ENCODE measurements at regions of chr1 and their contacts with region 1.

Region 1: GRCh38 chr1:50620680-50621329 is 197.6 kb upstream of the DMRTA2 start:
- DNase-seq: peak in 2 of 4 experiments; percentile 33 to 46
- ATAC-seq: peak; percentile 93
- H3K4me3 ChIP-seq: no peak overlapping the region
- H3K27ac ChIP-seq: no peak overlapping the region
- H3K4me1 ChIP-seq: no peaks in the 10 kb centered on the region
- H3K27me3 ChIP-seq: no peaks in the 10 kb centered on the region
- CTCF ChIP-seq: peak; percentile 22 to 63 (median 59); a peak in 5 of 6 replicates
- EP300 ChIP-seq: no peak
- POLR2A ChIP-seq: no peak
- RAD21 ChIP-seq: peak in 1 of 2 experiments; percentile 48; a peak in 2 of 4 replicates

Region 2: DNA sequence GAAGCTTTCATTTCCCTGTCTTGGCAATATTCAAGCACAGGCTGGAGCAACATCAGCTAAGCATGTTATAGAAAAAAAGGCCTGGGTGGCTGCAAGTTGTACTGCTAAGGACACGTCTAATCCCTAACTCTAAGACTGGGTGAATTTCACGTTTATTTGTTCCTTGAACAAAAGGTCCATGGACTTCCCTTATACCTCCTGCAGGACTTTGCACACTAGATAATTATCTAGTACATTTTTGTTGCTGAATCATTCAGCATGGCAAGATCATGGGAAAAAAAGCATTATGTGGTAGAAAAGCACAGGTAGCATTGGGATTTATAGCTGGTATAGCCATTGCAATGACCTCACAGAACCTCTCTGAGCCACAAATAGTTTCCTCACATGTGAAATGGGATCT is 66.9 kb before region 1 on chr1:
- CTCF ChIA-PET with region 1: no interaction called
- POLR2A ChIA-PET with region 1: no interaction called
- in situ Hi-C with region 1: no loop called
- intact Hi-C with region 1: no loop called
- DNase-seq: no peak
- ATAC-seq: peak; percentile 55
- H3K4me3 ChIP-seq: no peak overlapping the region
- H3K27ac ChIP-seq: no peak overlapping the region
- H3K4me1 ChIP-seq: peaks cover 0 to 5% of the 10 kb centered on the region in 2 experiments; a peak in 3 of 5 replicates
- H3K27me3 ChIP-seq: no peaks in the 10 kb centered on the region
- CTCF ChIP-seq: no peak
- EP300 ChIP-seq: no peak
- POLR2A ChIP-seq: no peak
- RAD21 ChIP-seq: no peak

Region 3: GRCh38 chr1:50704126-50704525 is 83.3 kb after region 1 on chr1:
- CTCF ChIA-PET with region 1: interaction called, 10 read pairs
- POLR2A ChIA-PET with region 1: interaction called, 6 read pairs
- in situ Hi-C with region 1: no loop called
- intact Hi-C with region 1: loop called (anchors 1 kb)
- DNase-seq: peak; percentile 68 to 70 (median 70)
- ATAC-seq: peak; percentile 89
- H3K4me3 ChIP-seq: no peak overlapping the region
- H3K27ac ChIP-seq: no peak overlapping the region
- H3K4me1 ChIP-seq: no peaks in the 10 kb centered on the region
- H3K27me3 ChIP-seq: no peaks in the 10 kb centered on the region
- CTCF ChIP-seq: peak; percentile 62 to 75 (median 68); a peak in 5 of 6 replicates
- EP300 ChIP-seq: no peak
- POLR2A ChIP-seq: no peak
- RAD21 ChIP-seq: peak; percentile 22 to 58; a peak in 1 of 4 replicates

Region 4: GRCh38 chr1:50735443-50735842 is 114.6 kb after region 1 on chr1:
- CTCF ChIA-PET with region 1: no interaction called
- POLR2A ChIA-PET with region 1: no interaction called
- in situ Hi-C with region 1: no loop called
- intact Hi-C with region 1: loop called (anchors 2 kb)
- DNase-seq: peak; percentile 28 to 47 (median 42)
- ATAC-seq: no peak
- H3K4me3 ChIP-seq: no peak overlapping the region
- H3K27ac ChIP-seq: no peak overlapping the region
- H3K4me1 ChIP-seq: no peaks in the 10 kb centered on the region
- H3K27me3 ChIP-seq: no peaks in the 10 kb centered on the region
- CTCF ChIP-seq: peak in 2 of 3 experiments; percentile 35 to 60; a peak in 4 of 6 replicates
- EP300 ChIP-seq: no peak
- POLR2A ChIP-seq: no peak
- RAD21 ChIP-seq: peak in 1 of 2 experiments; percentile 57; a peak in 3 of 4 replicates

Measured in K562 (cell line).